Pancreas (tissue), 10 donors: ENCODE measurements at regions of chr3 and their contacts with region 1.

Region 1: GRCh38 chr3:16600780-16601539 is 4.3 kb downstream of the DAZL start:
- DNase-seq: peak; percentile 54 to 89 (median 77)
- ATAC-seq: peak; percentile 43 to 89 (median 79)
- H3K4me3 ChIP-seq: no peak overlapping the region
- H3K27ac ChIP-seq: no peak overlapping the region
- H3K4me1 ChIP-seq: no peaks in the 10 kb centered on the region
- H3K27me3 ChIP-seq: no peaks in the 10 kb centered on the region
- CTCF ChIP-seq: peak; percentile 63 to 75 (median 70)

Region 2: GRCh38 chr3:17023006-17023664 is 422.2 kb after region 1 on chr3:
- intact Hi-C with region 1: loop called in 1 of 3 experiments (anchors 10 kb)
- DNase-seq: no peak
- ATAC-seq: peak in 2 of 4 donors; percentile 27 to 68
- H3K4me3 ChIP-seq: no peak overlapping the region
- H3K27ac ChIP-seq: no peak overlapping the region
- H3K4me1 ChIP-seq: peaks cover 0 to 6% (median 3%) of the 10 kb centered on the region in 3 donors
- H3K27me3 ChIP-seq: no peaks in the 10 kb centered on the region
- CTCF ChIP-seq: no peak

Region 3: DNA sequence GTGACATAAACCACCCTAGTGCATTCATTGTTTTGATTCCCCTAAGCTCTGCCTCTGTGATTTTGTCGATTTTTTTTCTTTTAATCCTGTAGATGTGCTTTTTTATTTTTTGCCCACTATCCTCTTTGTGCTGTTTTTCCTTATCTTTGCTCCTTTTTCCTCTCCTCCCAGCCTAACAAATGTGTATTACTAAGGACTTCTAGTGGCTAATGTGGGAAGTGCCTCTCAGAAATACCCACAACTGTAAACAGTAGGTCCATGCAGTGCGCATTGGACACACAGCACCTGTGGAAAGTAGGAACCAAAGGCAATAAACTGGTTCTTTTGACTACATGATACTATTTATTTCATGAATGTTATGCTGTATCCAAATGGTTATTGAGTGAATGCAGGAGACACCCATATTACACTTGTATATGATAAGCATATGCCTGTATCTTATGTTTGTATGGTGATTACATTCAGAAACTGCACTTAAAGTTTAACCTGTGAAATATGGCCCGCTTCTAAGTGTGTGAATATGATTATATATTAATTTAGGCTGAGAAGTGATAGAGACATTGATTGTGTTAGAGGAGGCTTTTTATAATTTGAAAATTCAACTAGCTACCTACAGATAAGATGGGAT is 431.6 kb after region 1 on chr3:
- intact Hi-C with region 1: loop called in 2 of 3 experiments (anchors 10 kb)
- DNase-seq: no peak
- ATAC-seq: peak; percentile 78 to 98 (median 91)
- H3K4me3 ChIP-seq: no peak overlapping the region
- H3K27ac ChIP-seq: no peak overlapping the region
- H3K4me1 ChIP-seq: peaks cover 0 to 1% (median 0%) of the 10 kb centered on the region in 3 donors
- H3K27me3 ChIP-seq: no peaks in the 10 kb centered on the region
- CTCF ChIP-seq: peak; percentile 10 to 65 (median 54)

Region 4: DNA sequence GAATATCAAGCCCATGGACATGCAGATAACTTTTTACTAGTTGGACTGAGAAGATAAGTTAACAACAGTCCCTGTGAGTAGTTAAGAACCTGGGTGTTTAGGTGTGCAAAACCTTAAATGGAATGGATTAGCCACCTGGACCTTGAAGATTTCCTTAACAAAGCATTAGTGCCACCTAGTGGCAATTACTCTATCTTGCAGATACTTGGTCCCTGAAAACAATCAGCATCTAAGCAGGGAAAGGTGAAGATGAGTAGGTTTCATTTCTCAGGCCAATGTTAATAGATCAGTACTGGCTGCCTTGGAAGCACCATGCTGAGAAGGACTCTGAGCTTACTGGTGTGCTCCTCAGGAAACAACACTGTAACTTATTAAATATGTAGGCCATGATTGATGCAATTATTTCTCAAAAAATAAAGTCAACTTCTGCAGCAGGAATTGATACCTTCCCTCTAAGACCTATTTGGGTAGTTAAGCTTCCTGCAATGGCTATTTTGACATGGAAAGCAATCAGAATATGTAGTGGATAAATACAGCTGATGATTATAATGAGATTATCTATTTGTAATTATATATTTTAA is 812.1 kb after region 1 on chr3:
- intact Hi-C with region 1: loop called in 1 of 3 experiments (anchors 10 kb)
- DNase-seq: peak in 1 of 6 donors; percentile 13
- ATAC-seq: peak; percentile 58 to 89 (median 84)
- H3K4me3 ChIP-seq: no peak overlapping the region
- H3K27ac ChIP-seq: no peak overlapping the region
- H3K4me1 ChIP-seq: no peaks in the 10 kb centered on the region
- H3K27me3 ChIP-seq: no peaks in the 10 kb centered on the region
- CTCF ChIP-seq: peak; percentile 46 to 79 (median 65)

Region 5: GRCh38 chr3:17894434-17895060 is 1293.6 kb after region 1 on chr3:
- intact Hi-C with region 1: no loop called
- DNase-seq: peak in 3 of 6 donors; percentile 21 to 43 (median 24)
- ATAC-seq: peak in 3 of 4 donors; percentile 65 to 80 (median 77)
- H3K4me3 ChIP-seq: no peak overlapping the region
- H3K27ac ChIP-seq: no peak overlapping the region
- H3K4me1 ChIP-seq: no peaks in the 10 kb centered on the region
- H3K27me3 ChIP-seq: no peaks in the 10 kb centered on the region
- CTCF ChIP-seq: peak in 1 of 4 donors; percentile 19